Dorsolateral prefrontal cortex (tissue), 120 donors: ENCODE measurements at regions of chr4 and their contacts with region 1.

Region 1: GRCh38 chr4:110516106-110516922 is 40.4 kb downstream of the ENPEP start:
- DNase-seq: peak; percentile 30 to 80 (median 64)
- H3K4me3 ChIP-seq: peak overlapping the region in 57 of 59 donors; percentile 0 to 63 (median 44)
- H3K27ac ChIP-seq: peak overlapping the region in 10 of 59 donors; percentile 1 to 49 (median 26)
- H3K27me3 ChIP-seq: peaks cover 0 to 3% (median 0%) of the 10 kb centered on the region in 45 donors
- CTCF ChIP-seq: peak; percentile 63 to 86 (median 76)

Region 2: GRCh38 chr4:109998867-109999584 is 517.3 kb before region 1 on chr4:
- intact Hi-C with region 1: loop called (anchors 2 to 5 kb)
- DNase-seq: no peak
- H3K4me3 ChIP-seq: no peak overlapping the region
- H3K27ac ChIP-seq: no peak overlapping the region
- H3K27me3 ChIP-seq: peaks cover 0 to 3% (median 0%) of the 10 kb centered on the region in 45 donors
- CTCF ChIP-seq: peak; percentile 49 to 96 (median 82)

Region 3: DNA sequence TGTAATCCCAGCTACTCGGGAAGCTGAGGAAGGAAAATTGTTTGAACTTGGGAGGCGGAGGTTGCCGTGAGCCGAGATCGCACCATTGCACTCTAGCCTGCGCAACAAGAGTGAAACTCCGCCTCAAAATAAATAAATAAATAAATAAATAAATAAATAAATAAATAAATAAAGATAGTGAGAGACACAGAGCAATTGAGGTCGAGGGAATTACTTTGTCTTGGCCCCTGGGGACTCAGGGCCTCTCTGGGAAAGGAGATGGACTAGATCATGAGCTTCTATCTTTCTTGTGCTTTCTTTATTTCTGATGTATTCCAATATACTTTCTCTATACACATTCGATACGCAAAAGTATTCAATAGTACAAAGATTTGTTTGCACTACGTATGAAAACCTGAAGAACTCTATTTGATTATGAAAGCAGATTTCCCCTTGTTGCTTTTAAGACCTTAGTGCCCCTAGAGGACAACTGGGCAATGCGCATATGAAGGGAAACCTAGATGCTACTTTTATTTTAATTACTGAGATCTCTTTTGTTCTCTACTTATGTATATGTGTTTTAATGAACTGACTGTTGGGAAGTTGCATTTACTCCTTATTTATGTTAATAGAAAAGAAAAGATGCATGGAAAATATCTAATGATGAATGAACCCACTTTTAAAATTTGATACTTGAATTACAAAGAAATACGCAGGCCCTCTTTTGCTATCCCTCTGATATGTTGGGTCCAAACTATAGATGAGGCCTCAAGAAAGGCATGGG is 305.1 kb before region 1 on chr4:
- intact Hi-C with region 1: loop called in 1 of 2 experiments (anchors 10 kb)
- DNase-seq: no peak
- H3K4me3 ChIP-seq: peak overlapping the region in 5 of 59 donors; percentile 5 to 39 (median 27)
- H3K27ac ChIP-seq: no peak overlapping the region
- H3K27me3 ChIP-seq: no peaks in the 10 kb centered on the region
- CTCF ChIP-seq: peak; percentile 48 to 88 (median 73)